Activated CD8-positive, alpha-beta T cell treated with anti-CD3 and anti-CD28 coated beads for 36 hours (primary cell): ENCODE measurements at regions of chr6 and their contacts with region 1.

Region 1: DNA sequence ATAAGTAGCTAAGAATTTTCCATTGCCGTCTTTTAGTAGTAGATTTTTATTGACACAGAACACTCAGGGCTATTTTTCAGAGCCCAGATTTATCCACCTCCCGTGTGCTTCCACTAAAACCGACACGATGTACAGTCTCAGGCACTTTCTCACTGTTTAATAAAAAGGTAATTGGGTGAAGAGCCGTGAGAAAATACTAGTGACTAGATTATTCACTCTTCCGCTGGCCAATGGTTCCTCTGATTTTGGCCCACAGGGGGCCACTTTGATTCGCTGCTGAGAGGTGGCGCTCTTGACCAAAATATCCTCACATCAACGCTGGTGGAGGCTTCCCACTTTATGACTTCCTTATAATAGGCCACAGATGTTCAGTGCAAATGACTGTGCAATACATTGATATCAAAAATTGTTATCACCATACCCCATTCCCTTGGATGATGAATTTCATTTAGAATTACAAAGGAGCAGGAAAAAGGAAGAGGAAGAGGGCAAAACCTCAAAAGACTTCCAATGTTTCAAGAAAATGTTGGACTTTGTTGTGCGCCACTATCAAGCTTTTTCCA is 12.3 kb upstream of the HDDC2 start:
- DNase-seq: peak; percentile 59
- ATAC-seq: peak; percentile 71
- H3K4me3 Mint-ChIP-seq: no peak overlapping the region
- H3K27ac Mint-ChIP-seq: no peak overlapping the region
- H3K4me1 Mint-ChIP-seq: peaks cover 2% of the 10 kb centered on the region
- H3K27me3 Mint-ChIP-seq: peaks cover 14% of the 10 kb centered on the region
- CTCF ChIP-seq: peak; percentile 66

Region 2: GRCh38 chr6:125285936-125286335 is 28.2 kb before region 1 on chr6:
- CTCF ChIA-PET with region 1: no interaction called
- POLR2A ChIA-PET with region 1: no interaction called
- intact Hi-C with region 1: no loop called
- DNase-seq: no peak
- ATAC-seq: no peak
- H3K4me3 Mint-ChIP-seq: no peak overlapping the region
- H3K27ac Mint-ChIP-seq: no peak overlapping the region
- H3K4me1 Mint-ChIP-seq: peaks cover 34% of the 10 kb centered on the region
- H3K27me3 Mint-ChIP-seq: no peaks in the 10 kb centered on the region
- CTCF ChIP-seq: no peak

Region 3: GRCh38 chr6:125301435-125302391 is 12.4 kb before region 1 on chr6 and contains the start of gene HDDC2:
- CTCF ChIA-PET with region 1: interaction called, 32 read pairs
- POLR2A ChIA-PET with region 1: interaction called, 4 read pairs
- intact Hi-C with region 1: no loop called
- DNase-seq: peak; percentile 47
- ATAC-seq: peak; percentile 76
- H3K4me3 Mint-ChIP-seq: peak within 1 kb of the TSS; percentile 89
- H3K27ac Mint-ChIP-seq: peak within 1 kb of the TSS; percentile 92
- H3K4me1 Mint-ChIP-seq: peaks cover 44% of the 10 kb centered on the region
- H3K27me3 Mint-ChIP-seq: no peaks in the 10 kb centered on the region
- CTCF ChIP-seq: no peak
- total RNA-seq, gene HDDC2: 119 to 121 TPM

Region 4: GRCh38 chr6:125393449-125393858 is 79.4 kb after region 1 on chr6:
- CTCF ChIA-PET with region 1: no interaction called
- POLR2A ChIA-PET with region 1: no interaction called
- intact Hi-C with region 1: no loop called
- DNase-seq: no peak
- ATAC-seq: no peak
- H3K4me3 Mint-ChIP-seq: no peak overlapping the region
- H3K27ac Mint-ChIP-seq: no peak overlapping the region
- H3K4me1 Mint-ChIP-seq: peaks cover 6% of the 10 kb centered on the region
- H3K27me3 Mint-ChIP-seq: peaks cover 19% of the 10 kb centered on the region
- CTCF ChIP-seq: no peak

Region 5: DNA sequence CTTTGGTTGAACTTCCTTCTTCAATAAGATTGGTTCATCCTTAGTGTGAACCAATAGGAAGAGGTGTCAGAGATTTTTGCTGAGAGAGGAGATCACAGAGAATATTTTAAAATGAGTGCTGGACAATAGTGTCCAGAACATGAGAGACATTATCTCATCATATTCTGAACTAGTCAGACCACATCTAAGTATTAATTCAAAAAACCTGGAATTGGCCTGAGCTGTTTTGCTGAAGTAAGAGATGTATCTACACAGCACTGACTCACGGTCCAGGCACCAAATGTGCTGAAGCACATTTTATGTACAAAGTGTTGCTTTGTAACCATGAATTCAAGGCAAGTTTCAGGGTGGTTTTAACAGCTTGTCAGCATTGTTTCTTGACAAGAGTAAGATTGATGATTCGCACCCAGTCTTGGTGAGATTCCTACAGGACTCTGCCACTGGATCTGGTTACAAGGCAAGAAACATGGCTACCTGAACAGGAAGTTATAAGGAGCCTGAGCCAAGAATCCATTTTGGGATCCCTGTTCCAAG is 257.2 kb after region 1 on chr6:
- CTCF ChIA-PET with region 1: no interaction called
- POLR2A ChIA-PET with region 1: no interaction called
- intact Hi-C with region 1: no loop called
- DNase-seq: no peak
- ATAC-seq: no peak
- H3K4me3 Mint-ChIP-seq: no peak overlapping the region
- H3K27ac Mint-ChIP-seq: no peak overlapping the region
- H3K4me1 Mint-ChIP-seq: no peaks in the 10 kb centered on the region
- H3K27me3 Mint-ChIP-seq: peaks cover 6% of the 10 kb centered on the region
- CTCF ChIP-seq: no peak

Region 6: GRCh38 chr6:125598422-125598821 is 284.3 kb after region 1 on chr6:
- CTCF ChIA-PET with region 1: no interaction called
- POLR2A ChIA-PET with region 1: no interaction called
- intact Hi-C with region 1: no loop called
- DNase-seq: no peak
- ATAC-seq: no peak
- H3K4me3 Mint-ChIP-seq: no peak overlapping the region
- H3K27ac Mint-ChIP-seq: no peak overlapping the region
- H3K4me1 Mint-ChIP-seq: no peaks in the 10 kb centered on the region
- H3K27me3 Mint-ChIP-seq: peaks cover 5% of the 10 kb centered on the region
- CTCF ChIP-seq: no peak

Region 7: GRCh38 chr6:125753218-125753936 is 439.3 kb after region 1 on chr6:
- CTCF ChIA-PET with region 1: interaction called, 44 read pairs
- POLR2A ChIA-PET with region 1: interaction called, 3 read pairs
- intact Hi-C with region 1: loop called (anchors 2 kb)
- DNase-seq: no peak
- ATAC-seq: no peak
- H3K4me3 Mint-ChIP-seq: no peak overlapping the region
- H3K27ac Mint-ChIP-seq: no peak overlapping the region
- H3K4me1 Mint-ChIP-seq: peaks cover 13% of the 10 kb centered on the region
- H3K27me3 Mint-ChIP-seq: peaks cover 39% of the 10 kb centered on the region
- CTCF ChIP-seq: peak; percentile 70

Region 8: DNA sequence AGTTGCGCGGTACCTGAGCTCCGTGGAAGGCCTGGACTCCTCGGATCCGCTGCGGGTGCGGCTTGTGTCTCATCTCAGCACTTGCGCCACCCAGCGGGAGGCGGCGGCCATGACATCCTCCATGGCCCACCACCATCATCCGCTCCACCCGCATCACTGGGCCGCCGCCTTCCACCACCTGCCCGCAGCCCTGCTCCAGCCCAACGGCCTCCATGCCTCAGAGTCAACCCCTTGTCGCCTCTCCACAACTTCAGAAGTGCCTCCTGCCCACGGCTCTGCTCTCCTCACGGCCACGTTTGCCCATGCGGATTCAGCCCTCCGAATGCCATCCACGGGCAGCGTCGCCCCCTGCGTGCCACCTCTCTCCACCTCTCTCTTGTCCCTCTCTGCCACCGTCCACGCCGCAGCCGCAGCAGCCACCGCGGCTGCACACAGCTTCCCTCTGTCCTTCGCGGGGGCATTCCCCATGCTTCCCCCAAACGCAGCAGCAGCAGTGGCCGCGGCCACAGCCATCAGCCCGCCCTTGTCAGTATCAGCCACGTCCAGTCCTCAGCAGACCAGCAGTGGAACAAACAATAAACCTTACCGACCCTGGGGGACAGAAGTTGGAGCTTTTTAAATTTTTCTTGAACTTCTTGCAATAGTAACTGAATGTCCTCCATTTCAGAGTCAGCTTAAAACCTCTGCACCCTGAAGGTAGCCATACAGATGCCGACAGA is 445.2 kb after region 1 on chr6:
- CTCF ChIA-PET with region 1: interaction called, 44 read pairs
- POLR2A ChIA-PET with region 1: interaction called, 3 read pairs
- intact Hi-C with region 1: loop called (anchors 2 kb)
- DNase-seq: peak; percentile 33
- ATAC-seq: peak; percentile 51
- H3K4me3 Mint-ChIP-seq: no peak overlapping the region
- H3K27ac Mint-ChIP-seq: no peak overlapping the region
- H3K4me1 Mint-ChIP-seq: peaks cover 2% of the 10 kb centered on the region
- H3K27me3 Mint-ChIP-seq: peaks cover 25% of the 10 kb centered on the region
- CTCF ChIP-seq: peak; percentile 27

Region 9: GRCh38 chr6:125765944-125766343 is 451.8 kb after region 1 on chr6:
- CTCF ChIA-PET with region 1: interaction called, 50 read pairs
- POLR2A ChIA-PET with region 1: no interaction called
- intact Hi-C with region 1: loop called (anchors 1 kb)
- DNase-seq: no peak
- ATAC-seq: no peak
- H3K4me3 Mint-ChIP-seq: no peak overlapping the region
- H3K27ac Mint-ChIP-seq: no peak overlapping the region
- H3K4me1 Mint-ChIP-seq: peaks cover 2% of the 10 kb centered on the region
- H3K27me3 Mint-ChIP-seq: peaks cover 19% of the 10 kb centered on the region
- CTCF ChIP-seq: no peak